Heart left ventricle (tissue), 16 donors: ENCODE measurements at regions of chr21 and their contacts with region 1.

Region 1: DNA sequence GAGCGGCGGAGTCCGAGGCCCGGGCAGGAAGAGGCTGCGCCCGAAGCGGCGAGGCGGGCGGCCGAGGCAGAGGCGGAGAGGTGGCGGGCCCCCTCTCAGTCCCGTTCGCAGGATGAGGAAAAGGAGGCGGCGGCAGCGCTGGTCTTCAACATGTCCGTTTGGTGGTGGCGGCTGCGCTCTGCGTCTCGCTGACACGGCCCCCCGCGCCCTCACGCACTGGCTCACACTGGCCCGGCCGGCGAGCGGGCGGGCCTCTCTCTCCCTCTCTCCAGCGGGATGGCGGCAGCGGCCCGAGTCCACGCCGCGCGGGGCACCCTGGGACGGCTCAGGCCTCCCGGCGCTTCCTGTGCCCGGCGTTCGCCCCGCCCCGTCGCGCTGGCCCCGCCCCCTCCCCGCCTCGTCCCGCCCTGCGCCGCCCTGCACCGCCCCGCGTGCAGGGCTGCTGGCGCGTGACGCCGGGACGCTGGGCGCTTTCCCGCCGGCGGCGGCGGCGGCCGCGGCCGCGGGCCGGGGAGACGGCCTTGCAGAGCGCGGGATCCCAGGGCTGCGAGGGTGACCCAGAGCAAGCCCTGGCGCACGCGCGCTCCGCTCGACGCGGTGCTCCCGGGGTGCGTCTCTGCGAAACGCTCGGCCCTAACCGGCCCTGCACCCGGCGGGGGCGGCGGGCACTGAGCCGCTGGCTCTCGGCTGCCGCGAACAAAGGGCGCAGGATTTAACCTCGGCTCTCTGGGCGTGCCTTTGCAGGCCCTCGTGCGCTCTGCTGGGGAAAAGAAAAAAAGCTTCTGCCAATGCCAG is at the start of gene SCAF4:
- DNase-seq: peak; percentile 90 to 96 (median 93)
- ATAC-seq: peak; percentile 94 to 95 (median 94)
- H3K4me3 ChIP-seq: peak within 1 kb of the TSS; percentile 70 to 99 (median 90)
- H3K27ac ChIP-seq: peak within 1 kb of the TSS; percentile 74 to 98 (median 96)
- H3K4me1 ChIP-seq: peaks cover 16 to 52% (median 41%) of the 10 kb centered on the region in 12 donors
- H3K27me3 ChIP-seq: no peaks in the 10 kb centered on the region
- CTCF ChIP-seq: no peak
- POLR2A ChIP-seq: peak; percentile 59 to 81
- total RNA-seq, gene SCAF4: 9.3 to 25.8 (median 17.3) TPM

Region 2: GRCh38 chr21:31659536-31660258 is 72.3 kb before region 1 on chr21 and contains the start of gene SOD1:
- intact Hi-C with region 1: loop called in 1 of 10 experiments (anchors 5 kb)
- DNase-seq: peak; percentile 96 to 97 (median 97)
- ATAC-seq: peak; percentile 97 to 99 (median 97)
- H3K4me3 ChIP-seq: peak within 1 kb of the TSS; percentile 71 to 92 (median 86)
- H3K27ac ChIP-seq: peak within 1 kb of the TSS; percentile 81 to 98 (median 93)
- H3K4me1 ChIP-seq: peaks cover 0 to 44% (median 28%) of the 10 kb centered on the region in 12 donors
- H3K27me3 ChIP-seq: no peaks in the 10 kb centered on the region
- CTCF ChIP-seq: peak in 4 of 12 donors; percentile 28 to 56 (median 40)
- POLR2A ChIP-seq: peak; percentile 7 to 94
- total RNA-seq, gene SOD1: 348 to 487 (median 422) TPM